ENCODE measurements at regions of chr9 and their contacts with region 1.

Region 1: GRCh38 chr9:19085295-19085694 is 17.4 kb downstream of the HAUS6 start:
- DNase-seq: peak; percentile 35
- ATAC-seq: peak; percentile 65
- H3K4me3 ChIP-seq: no peak overlapping the region
- H3K27ac ChIP-seq: no peak overlapping the region
- H3K4me1 ChIP-seq: peaks cover 13% of the 10 kb centered on the region
- H3K27me3 ChIP-seq: no peaks in the 10 kb centered on the region
- CTCF ChIP-seq: peak; percentile 51
- EP300 ChIP-seq: no peak
- POLR2A ChIP-seq: no peak
- RAD21 ChIP-seq: no peak

Region 2: DNA sequence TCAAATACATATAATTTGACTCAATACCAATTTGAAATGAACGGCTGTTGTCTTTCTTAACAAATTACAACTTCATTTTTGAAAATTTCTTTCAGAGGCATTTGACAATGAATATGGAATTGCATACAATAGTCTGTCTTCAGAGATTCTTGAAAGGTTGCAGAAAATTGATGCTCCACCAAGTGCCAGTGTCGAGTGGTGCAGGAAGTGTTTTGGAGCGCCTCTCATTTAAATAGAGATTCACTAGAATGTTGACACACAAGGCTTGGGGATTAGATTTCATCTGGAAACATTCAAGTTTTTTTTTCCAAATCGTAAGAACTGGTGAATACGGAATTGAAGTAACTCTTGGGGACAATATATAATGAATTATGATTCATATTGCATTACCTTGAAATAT is 286.6 kb after region 1 on chr9:
- CTCF ChIA-PET with region 1: no interaction called
- POLR2A ChIA-PET with region 1: no interaction called
- in situ Hi-C with region 1: loop called (anchors 25 kb)
- intact Hi-C with region 1: no loop called
- DNase-seq: no peak
- ATAC-seq: peak; percentile 20; the same call in 2 of the 3 replicates
- H3K4me3 ChIP-seq: no peak overlapping the region
- H3K27ac ChIP-seq: no peak overlapping the region
- H3K4me1 ChIP-seq: peaks cover 3% of the 10 kb centered on the region
- H3K27me3 ChIP-seq: no peaks in the 10 kb centered on the region
- CTCF ChIP-seq: no peak
- EP300 ChIP-seq: no peak
- POLR2A ChIP-seq: no peak
- RAD21 ChIP-seq: no peak